K562 (cell line): ENCODE measurements at regions of chr6 and their contacts with region 1.

Region 1: GRCh38 chr6:41846666-41847237 is 48.4 kb downstream of the USP49 start:
- DNase-seq: peak; percentile 75 to 92 (median 83)
- ATAC-seq: peak; percentile 99
- H3K4me3 ChIP-seq: no peak overlapping the region
- H3K27ac ChIP-seq: peak overlapping the region; percentile 67
- H3K4me1 ChIP-seq: peaks cover 2 to 7% of the 10 kb centered on the region in 2 experiments; a peak in 3 of 5 replicates
- H3K27me3 ChIP-seq: no peaks in the 10 kb centered on the region
- CTCF ChIP-seq: peak; percentile 85 to 98 (median 93)
- EP300 ChIP-seq: peak; percentile 69
- POLR2A ChIP-seq: no peak
- RAD21 ChIP-seq: peak; percentile 91 to 96

Region 2: DNA sequence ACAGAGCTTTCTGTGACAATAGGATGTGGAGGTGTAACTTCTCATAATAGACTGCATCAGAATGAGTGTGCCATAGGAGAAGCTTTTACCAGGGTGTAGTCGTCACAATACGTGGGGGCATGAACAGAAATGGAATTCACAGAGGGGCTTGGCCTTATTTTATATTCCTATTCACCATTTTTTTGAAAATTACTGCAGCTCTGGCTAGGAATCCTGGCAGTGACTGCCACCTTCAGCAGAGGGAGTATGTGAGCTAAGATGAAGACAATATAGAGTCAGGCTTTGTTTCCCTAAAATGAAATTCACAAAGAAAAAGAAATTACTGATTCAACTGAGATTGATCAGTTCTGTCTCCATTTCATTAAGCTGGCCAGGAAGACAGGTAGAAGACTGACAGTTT is 45.4 kb before region 1 on chr6:
- CTCF ChIA-PET with region 1: interaction called, 3 read pairs
- POLR2A ChIA-PET with region 1: no interaction called
- in situ Hi-C with region 1: no loop called
- intact Hi-C with region 1: loop called (anchors 5 kb)
- DNase-seq: peak in 1 of 4 experiments; percentile 33
- ATAC-seq: peak; percentile 71
- H3K4me3 ChIP-seq: no peak overlapping the region
- H3K27ac ChIP-seq: no peak overlapping the region
- H3K4me1 ChIP-seq: peaks cover 0 to 3% of the 10 kb centered on the region in 2 experiments; a peak in 1 of 5 replicates
- H3K27me3 ChIP-seq: no peaks in the 10 kb centered on the region
- CTCF ChIP-seq: peak; percentile 54 to 71 (median 63); a peak in 5 of 6 replicates
- EP300 ChIP-seq: no peak
- POLR2A ChIP-seq: no peak
- RAD21 ChIP-seq: peak; percentile 70 to 78

Region 3: DNA sequence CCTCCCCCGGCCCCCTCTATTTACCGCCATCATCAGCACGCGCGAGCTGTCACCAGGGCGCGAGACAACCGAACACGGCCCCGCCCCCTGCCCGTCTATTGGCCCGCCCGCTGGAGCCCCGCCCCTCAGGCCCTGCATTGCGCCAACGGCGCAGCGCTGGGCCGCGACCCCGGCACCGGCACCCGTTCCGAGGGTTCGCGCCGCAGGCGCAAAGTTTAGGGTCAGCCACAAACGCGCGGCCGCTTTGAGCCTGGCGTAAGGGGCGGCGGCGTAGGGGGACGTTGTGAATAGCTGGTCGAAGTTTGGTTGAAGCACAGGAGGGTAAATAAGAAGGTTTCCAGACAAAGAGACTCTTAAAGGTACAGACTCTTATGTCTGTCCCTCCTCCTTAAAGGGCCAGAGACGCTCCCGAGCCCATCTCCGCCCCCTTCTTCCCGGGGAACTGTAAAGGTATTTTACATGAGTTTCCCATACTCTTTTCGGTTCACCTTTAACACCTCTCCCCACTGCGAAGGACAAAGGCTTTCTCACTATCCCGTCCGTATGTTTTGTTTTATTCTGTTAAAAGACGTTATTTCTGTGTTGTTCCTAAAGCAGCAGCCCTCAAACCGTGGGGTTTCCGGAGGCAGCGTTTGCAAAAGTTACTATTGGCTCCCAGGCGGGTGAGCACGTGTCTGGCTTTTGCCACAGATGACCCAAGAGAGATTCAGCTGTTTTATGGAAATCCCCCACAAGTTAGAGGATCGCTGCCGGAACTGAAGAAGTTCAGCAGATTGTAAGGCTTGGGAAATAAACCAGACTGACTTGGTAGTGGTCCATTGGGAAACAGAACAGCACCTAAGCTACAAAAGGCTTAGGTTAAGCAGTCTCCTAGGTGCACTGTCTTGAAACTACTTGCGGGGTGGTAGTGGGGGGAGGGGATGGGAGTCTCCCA is 48.8 kb after region 1 on chr6 and contains the start of gene USP49:
- CTCF ChIA-PET with region 1: no interaction called
- POLR2A ChIA-PET with region 1: no interaction called
- in situ Hi-C with region 1: no loop called
- intact Hi-C with region 1: loop called (anchors 1 kb)
- DNase-seq: peak; percentile 97 to 98 (median 98)
- ATAC-seq: peak; percentile 96
- H3K4me3 ChIP-seq: peak within 1 kb of the TSS; percentile 56
- H3K27ac ChIP-seq: peak within 1 kb of the TSS; percentile 79
- H3K4me1 ChIP-seq: peaks cover 8 to 11% of the 10 kb centered on the region in 2 experiments
- H3K27me3 ChIP-seq: no peaks in the 10 kb centered on the region
- CTCF ChIP-seq: peak in 1 of 3 experiments; percentile 1; a peak in 1 of 6 replicates
- EP300 ChIP-seq: no peak
- POLR2A ChIP-seq: peak; percentile 85
- RAD21 ChIP-seq: no peak
- polyA plus RNA-seq, gene USP49: 1.0 to 1.6 TPM

Region 4: DNA sequence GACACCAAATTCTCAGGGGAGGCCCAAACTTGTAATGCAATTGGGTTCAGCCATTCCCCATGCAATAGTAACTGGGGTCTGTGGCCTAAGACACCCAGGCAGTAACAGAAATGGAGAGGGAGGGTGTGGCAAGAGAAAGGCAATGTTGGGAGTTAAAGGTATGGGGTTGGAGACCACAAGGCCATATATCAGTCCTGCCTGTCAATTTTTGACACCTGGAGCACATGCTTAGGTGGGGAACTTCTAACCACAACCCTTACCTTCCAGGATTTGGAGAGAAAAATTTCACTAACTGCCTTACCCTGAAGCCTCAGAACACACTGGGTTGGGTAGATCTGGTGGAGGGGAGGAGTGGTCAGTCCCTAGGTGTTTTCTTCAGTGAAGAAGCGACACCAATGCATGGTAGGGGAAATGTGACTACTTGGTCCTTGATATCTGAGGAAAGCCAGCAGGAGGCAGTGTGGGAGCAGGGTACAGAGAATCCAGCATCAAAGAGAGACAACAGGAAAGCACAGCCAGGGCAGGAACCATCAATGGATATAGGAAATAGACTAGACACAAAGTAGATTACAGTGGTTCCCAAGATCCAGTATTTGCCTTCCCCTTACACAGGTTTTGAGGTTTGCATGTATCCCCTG is 55.2 kb after region 1 on chr6:
- CTCF ChIA-PET with region 1: no interaction called
- POLR2A ChIA-PET with region 1: no interaction called
- in situ Hi-C with region 1: no loop called
- intact Hi-C with region 1: loop called (anchors 2 kb)
- DNase-seq: peak; percentile 47 to 84 (median 66)
- ATAC-seq: peak; percentile 96
- H3K4me3 ChIP-seq: no peak overlapping the region
- H3K27ac ChIP-seq: no peak overlapping the region; the same call in 2 of the 3 replicates
- H3K4me1 ChIP-seq: peaks cover 0 to 2% of the 10 kb centered on the region in 2 experiments; a peak in 1 of 5 replicates
- H3K27me3 ChIP-seq: no peaks in the 10 kb centered on the region
- CTCF ChIP-seq: peak; percentile 85 to 96 (median 87)
- EP300 ChIP-seq: 0 out of 2 replicates have a peak, but pooled peaks have one; percentile 15
- POLR2A ChIP-seq: no peak
- RAD21 ChIP-seq: peak; percentile 96 to 98

Region 5: GRCh38 chr6:41920921-41921711 is 74.4 kb after region 1 on chr6 and contains the starts of genes BYSL and MED20:
- CTCF ChIA-PET with region 1: no interaction called
- POLR2A ChIA-PET with region 1: no interaction called
- in situ Hi-C with region 1: no loop called
- intact Hi-C with region 1: loop called (anchors 5 kb)
- DNase-seq: peak; percentile 95 to 98 (median 96)
- ATAC-seq: peak; percentile 89
- H3K4me3 ChIP-seq: peak within 1 kb of the TSS; percentile 82
- H3K27ac ChIP-seq: peak within 1 kb of the TSS; percentile 98
- H3K4me1 ChIP-seq: peaks cover 14 to 16% of the 10 kb centered on the region in 2 experiments; a peak in 4 of 5 replicates
- H3K27me3 ChIP-seq: no peaks in the 10 kb centered on the region
- CTCF ChIP-seq: peak; percentile 91 to 99 (median 98)
- EP300 ChIP-seq: peak; percentile 43; the same call in 1 of the 2 replicates
- POLR2A ChIP-seq: peak; percentile 88
- RAD21 ChIP-seq: peak in 1 of 2 experiments; percentile 20; a peak in 3 of 4 replicates
- polyA plus RNA-seq, gene BYSL: 22.2 to 25.8 TPM
- polyA plus RNA-seq, gene MED20: 63.8 to 80.9 TPM